Heart left ventricle (tissue), 16 donors: ENCODE measurements at regions of chr2 and their contacts with region 1.

Region 1: DNA sequence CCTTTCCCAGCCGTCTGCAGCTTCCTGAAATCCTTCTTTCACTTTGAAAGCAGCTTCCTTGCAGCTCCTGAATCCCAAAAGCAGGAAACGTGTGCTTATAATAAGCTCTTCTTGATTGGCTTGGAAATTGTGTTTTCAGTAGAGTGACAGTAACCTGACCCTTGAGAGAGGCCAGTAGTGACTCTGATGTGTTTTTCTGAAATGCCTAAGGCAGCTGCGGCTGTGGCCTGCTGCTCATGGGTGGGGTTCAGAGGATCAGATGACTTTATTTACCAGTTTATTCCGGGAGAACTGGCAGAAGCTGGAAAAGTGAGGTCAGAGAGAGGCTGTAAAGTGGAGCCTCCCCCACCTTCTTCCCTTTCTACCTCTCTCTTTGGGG is 31.9 kb upstream of the RPIA start:
- DNase-seq: peak in 3 of 5 donors; percentile 40 to 63 (median 56)
- ATAC-seq: peak; percentile 75 to 91 (median 84)
- H3K4me3 ChIP-seq: peak overlapping the region in 7 of 12 donors; percentile 4 to 37 (median 25)
- H3K27ac ChIP-seq: peak overlapping the region; percentile 68 to 87 (median 79)
- H3K4me1 ChIP-seq: peaks cover 0 to 34% (median 22%) of the 10 kb centered on the region in 12 donors
- H3K27me3 ChIP-seq: no peaks in the 10 kb centered on the region
- CTCF ChIP-seq: no peak
- POLR2A ChIP-seq: peak in 1 of 2 donors; percentile 28

Region 2: GRCh38 chr2:88500695-88501094 is 158.8 kb before region 1 on chr2:
- intact Hi-C with region 1: no loop called
- DNase-seq: no peak
- ATAC-seq: no peak
- H3K4me3 ChIP-seq: no peak overlapping the region
- H3K27ac ChIP-seq: no peak overlapping the region
- H3K4me1 ChIP-seq: no peaks in the 10 kb centered on the region
- H3K27me3 ChIP-seq: no peaks in the 10 kb centered on the region
- CTCF ChIP-seq: no peak
- POLR2A ChIP-seq: no peak

Region 3: GRCh38 chr2:88600038-88600465 is 59.5 kb before region 1 on chr2:
- intact Hi-C with region 1: loop called in 1 of 10 experiments (anchors 2 kb)
- DNase-seq: peak in 4 of 5 donors; percentile 26 to 59 (median 40)
- ATAC-seq: peak; percentile 83 to 95 (median 95)
- H3K4me3 ChIP-seq: peak overlapping the region in 6 of 12 donors; percentile 0 to 17 (median 3)
- H3K27ac ChIP-seq: peak overlapping the region; percentile 19 to 89 (median 73)
- H3K4me1 ChIP-seq: peaks cover 6 to 60% (median 41%) of the 10 kb centered on the region in 12 donors
- H3K27me3 ChIP-seq: no peaks in the 10 kb centered on the region
- CTCF ChIP-seq: no peak
- POLR2A ChIP-seq: no peak

Region 4: DNA sequence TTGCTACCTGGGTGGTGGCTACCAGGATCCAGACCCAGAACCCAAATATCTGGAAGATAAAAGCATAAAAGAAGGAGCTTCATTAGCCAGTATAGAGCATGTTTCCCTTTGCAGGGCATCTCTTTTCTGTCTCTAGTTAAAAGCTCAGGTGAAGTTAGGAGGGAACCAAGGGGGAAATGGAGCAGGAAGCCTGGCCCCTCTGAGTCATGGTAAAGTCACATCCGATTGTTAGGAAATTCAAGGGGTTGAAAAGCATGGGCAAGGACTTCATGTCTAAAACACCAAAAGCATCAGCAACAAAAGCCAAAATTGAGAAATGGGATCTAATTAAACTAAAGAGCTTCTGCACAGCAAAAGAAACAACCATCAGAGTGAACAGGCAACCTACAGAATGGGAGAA is 158.9 kb after region 1 on chr2:
- intact Hi-C with region 1: no loop called
- DNase-seq: no peak
- ATAC-seq: peak in 1 of 4 donors; percentile 28
- H3K4me3 ChIP-seq: no peak overlapping the region
- H3K27ac ChIP-seq: peak overlapping the region in 1 of 12 donors; percentile 51
- H3K4me1 ChIP-seq: no peaks in the 10 kb centered on the region
- H3K27me3 ChIP-seq: peaks cover 0 to 3% (median 0%) of the 10 kb centered on the region in 9 donors
- CTCF ChIP-seq: no peak
- POLR2A ChIP-seq: no peak